ENCODE measurements at regions of chr2 and their contacts with region 1.

Region 1: DNA sequence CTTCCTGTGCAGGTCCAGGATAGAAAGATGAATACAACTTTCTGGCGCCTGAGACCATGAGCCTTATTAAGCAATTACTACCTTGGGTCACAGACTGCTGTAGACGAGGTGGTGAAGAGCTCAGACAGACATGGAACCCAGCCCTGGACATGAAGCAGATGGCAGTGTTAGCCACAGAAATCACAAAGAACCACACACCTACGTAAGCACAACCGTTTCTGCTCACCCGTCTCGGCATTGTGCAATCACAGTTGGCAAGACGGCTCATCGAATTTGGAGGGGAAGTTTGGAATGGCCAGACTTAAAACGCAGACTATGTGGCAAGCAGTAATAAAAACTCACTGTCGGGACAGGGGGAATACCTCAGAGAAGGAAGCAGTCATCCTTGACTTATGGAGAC is 24.3 kb upstream of the ASPRV1 start:
- DNase-seq: peak; percentile 97 to 100 (median 97)
- H3K4me3 ChIP-seq: peak overlapping the region in 1 of 3 experiments; percentile 33
- H3K4me3 Mint-ChIP-seq: peak overlapping the region; percentile 20 to 47
- H3K27ac ChIP-seq: peak overlapping the region; percentile 58 to 90
- H3K27ac Mint-ChIP-seq: peak overlapping the region; percentile 93 to 96 (median 95)
- H3K4me1 ChIP-seq: peaks cover 31 to 35% of the 10 kb centered on the region in 2 donors
- H3K4me1 Mint-ChIP-seq: peaks cover 37% of the 10 kb centered on the region
- H3K27me3 ChIP-seq: no peaks in the 10 kb centered on the region
- H3K27me3 Mint-ChIP-seq: peaks cover 0 to 2% (median 0%) of the 10 kb centered on the region in 3 donors
- CTCF ChIP-seq: peak; percentile 42

Region 2: GRCh38 chr2:69741619-69742466 is 243.8 kb before region 1 on chr2 and contains the start of gene ANXA4:
- intact Hi-C with region 1: no loop called
- DNase-seq: peak; percentile 40 to 59 (median 57)
- H3K4me3 ChIP-seq: peak within 1 kb of the TSS; percentile 80 to 93 (median 87)
- H3K4me3 Mint-ChIP-seq: peak within 1 kb of the TSS; percentile 97 to 100
- H3K27ac ChIP-seq: peak within 1 kb of the TSS; percentile 80 to 89
- H3K27ac Mint-ChIP-seq: peak within 1 kb of the TSS; percentile 86 to 97 (median 93)
- H3K4me1 ChIP-seq: peaks cover 21 to 34% of the 10 kb centered on the region in 2 donors
- H3K4me1 Mint-ChIP-seq: peaks cover 43% of the 10 kb centered on the region
- H3K27me3 ChIP-seq: no peaks in the 10 kb centered on the region
- H3K27me3 Mint-ChIP-seq: peaks cover 0 to 3% (median 3%) of the 10 kb centered on the region in 3 donors
- CTCF ChIP-seq: no peak
- polyA plus RNA-seq, gene ANXA4: 30.0 to 95.7 (median 64.7) TPM

Region 3: GRCh38 chr2:69933839-69934613 is 51.7 kb before region 1 on chr2:
- intact Hi-C with region 1: loop called in 1 of 2 experiments (anchors 5 kb)
- DNase-seq: peak; percentile 85 to 95 (median 90)
- H3K4me3 ChIP-seq: peak overlapping the region in 2 of 3 experiments; percentile 12 to 64
- H3K4me3 Mint-ChIP-seq: peak overlapping the region; percentile 1 to 81
- H3K27ac ChIP-seq: peak overlapping the region; percentile 44 to 94
- H3K27ac Mint-ChIP-seq: peak overlapping the region; percentile 77 to 94 (median 91)
- H3K4me1 ChIP-seq: peaks cover 57 to 78% of the 10 kb centered on the region in 2 donors
- H3K4me1 Mint-ChIP-seq: peaks cover 71% of the 10 kb centered on the region
- H3K27me3 ChIP-seq: no peaks in the 10 kb centered on the region
- H3K27me3 Mint-ChIP-seq: no peaks in the 10 kb centered on the region
- CTCF ChIP-seq: no peak

Region 4: GRCh38 chr2:69946351-69947077 is 39.2 kb before region 1 on chr2:
- intact Hi-C with region 1: loop called in 1 of 2 experiments (anchors 2 kb)
- DNase-seq: peak; percentile 63 to 82 (median 81)
- H3K4me3 ChIP-seq: peak overlapping the region in 1 of 3 experiments; percentile 53
- H3K4me3 Mint-ChIP-seq: peak overlapping the region; percentile 51
- H3K27ac ChIP-seq: peak overlapping the region; percentile 71 to 92
- H3K27ac Mint-ChIP-seq: peak overlapping the region; percentile 94 to 98 (median 97)
- H3K4me1 ChIP-seq: peaks cover 61 to 65% of the 10 kb centered on the region in 2 donors
- H3K4me1 Mint-ChIP-seq: peaks cover 67% of the 10 kb centered on the region
- H3K27me3 ChIP-seq: no peaks in the 10 kb centered on the region
- H3K27me3 Mint-ChIP-seq: no peaks in the 10 kb centered on the region
- CTCF ChIP-seq: no peak

Region 5: GRCh38 chr2:70570041-70570663 is 584.5 kb after region 1 on chr2:
- intact Hi-C with region 1: no loop called
- DNase-seq: no peak
- H3K4me3 ChIP-seq: no peak overlapping the region
- H3K4me3 Mint-ChIP-seq: no peak overlapping the region
- H3K27ac ChIP-seq: no peak overlapping the region
- H3K27ac Mint-ChIP-seq: no peak overlapping the region
- H3K4me1 ChIP-seq: peaks cover 0 to 3% of the 10 kb centered on the region in 2 donors
- H3K4me1 Mint-ChIP-seq: peaks cover 5% of the 10 kb centered on the region
- H3K27me3 ChIP-seq: no peaks in the 10 kb centered on the region
- H3K27me3 Mint-ChIP-seq: peaks cover 2 to 6% (median 3%) of the 10 kb centered on the region in 3 donors
- CTCF ChIP-seq: no peak